ENCODE measurements at regions of chr1 and their contacts with region 1.

Region 1: GRCh38 chr1:87464022-87464490 is 135.4 kb downstream of the LMO4 start:
- DNase-seq: no peak
- ATAC-seq: no peak
- H3K4me3 ChIP-seq: no peak overlapping the region
- H3K27ac ChIP-seq: no peak overlapping the region
- H3K4me1 ChIP-seq: no peaks in the 10 kb centered on the region
- H3K27me3 ChIP-seq: no peaks in the 10 kb centered on the region

Region 2: GRCh38 chr1:87318056-87318650 is 145.9 kb before region 1 on chr1:
- intact Hi-C with region 1: no loop called
- DNase-seq: no peak
- ATAC-seq: no peak
- H3K4me3 ChIP-seq: no peak overlapping the region
- H3K27ac ChIP-seq: no peak overlapping the region
- H3K4me1 ChIP-seq: no peaks in the 10 kb centered on the region
- H3K27me3 ChIP-seq: no peaks in the 10 kb centered on the region

Region 3: DNA sequence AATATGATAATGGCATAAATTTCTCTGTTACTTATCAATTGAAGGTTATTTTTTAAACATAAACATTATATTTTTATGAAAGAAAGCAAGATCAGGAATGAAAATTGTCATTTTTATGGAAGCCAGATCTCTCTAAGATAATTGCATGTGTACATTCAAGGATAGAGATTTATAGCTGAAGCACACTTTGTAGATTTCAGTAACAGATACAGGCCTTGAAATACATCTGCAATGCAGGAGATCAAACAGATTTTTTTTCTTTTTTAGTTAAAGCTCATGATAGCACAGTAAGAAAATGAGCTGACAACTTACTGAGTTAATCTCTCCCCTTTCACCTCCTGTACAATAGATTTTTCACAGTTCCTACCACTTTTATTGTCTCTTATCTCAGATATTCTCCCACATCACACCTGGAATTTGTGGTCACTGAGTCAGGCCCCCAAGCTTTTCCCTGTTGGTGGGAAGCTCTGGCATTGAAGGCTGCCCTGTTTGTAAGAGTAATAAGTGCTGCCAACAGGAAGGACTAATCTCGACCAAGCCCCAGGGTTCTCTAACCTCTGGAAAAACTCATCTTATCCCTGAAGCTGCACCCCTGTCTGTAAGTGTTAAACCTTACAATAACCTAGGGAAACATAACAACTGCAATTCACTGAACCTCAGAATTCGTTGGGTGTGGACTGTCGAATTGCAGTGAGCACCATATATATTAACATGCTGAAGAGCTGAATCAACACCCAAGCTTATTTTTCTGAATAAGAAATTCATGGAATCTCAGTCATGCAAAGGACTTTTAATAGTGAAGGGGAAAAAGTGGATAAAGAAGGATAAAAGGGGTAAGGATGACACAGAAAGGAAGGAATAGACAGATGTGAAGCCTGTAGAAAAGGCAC is 463.6 kb after region 1 on chr1:
- intact Hi-C with region 1: loop called in 1 of 2 experiments (anchors 10 kb)
- DNase-seq: no peak
- ATAC-seq: no peak
- H3K4me3 ChIP-seq: no peak overlapping the region
- H3K27ac ChIP-seq: no peak overlapping the region
- H3K4me1 ChIP-seq: peaks cover 0 to 5% of the 10 kb centered on the region in 2 donors
- H3K27me3 ChIP-seq: no peaks in the 10 kb centered on the region

Measured in aorta (tissue), 5 donors.